ENCODE measurements at regions of chr10 and their contacts with region 1.

Region 1: GRCh38 chr10:102615361-102615760 is 28.9 kb upstream of the TRIM8 start:
- DNase-seq: peak; percentile 45
- H3K4me3 Mint-ChIP-seq: no peak overlapping the region
- H3K27ac Mint-ChIP-seq: no peak overlapping the region
- H3K4me1 Mint-ChIP-seq: peaks cover 29% of the 10 kb centered on the region
- H3K27me3 Mint-ChIP-seq: no peaks in the 10 kb centered on the region

Region 2: DNA sequence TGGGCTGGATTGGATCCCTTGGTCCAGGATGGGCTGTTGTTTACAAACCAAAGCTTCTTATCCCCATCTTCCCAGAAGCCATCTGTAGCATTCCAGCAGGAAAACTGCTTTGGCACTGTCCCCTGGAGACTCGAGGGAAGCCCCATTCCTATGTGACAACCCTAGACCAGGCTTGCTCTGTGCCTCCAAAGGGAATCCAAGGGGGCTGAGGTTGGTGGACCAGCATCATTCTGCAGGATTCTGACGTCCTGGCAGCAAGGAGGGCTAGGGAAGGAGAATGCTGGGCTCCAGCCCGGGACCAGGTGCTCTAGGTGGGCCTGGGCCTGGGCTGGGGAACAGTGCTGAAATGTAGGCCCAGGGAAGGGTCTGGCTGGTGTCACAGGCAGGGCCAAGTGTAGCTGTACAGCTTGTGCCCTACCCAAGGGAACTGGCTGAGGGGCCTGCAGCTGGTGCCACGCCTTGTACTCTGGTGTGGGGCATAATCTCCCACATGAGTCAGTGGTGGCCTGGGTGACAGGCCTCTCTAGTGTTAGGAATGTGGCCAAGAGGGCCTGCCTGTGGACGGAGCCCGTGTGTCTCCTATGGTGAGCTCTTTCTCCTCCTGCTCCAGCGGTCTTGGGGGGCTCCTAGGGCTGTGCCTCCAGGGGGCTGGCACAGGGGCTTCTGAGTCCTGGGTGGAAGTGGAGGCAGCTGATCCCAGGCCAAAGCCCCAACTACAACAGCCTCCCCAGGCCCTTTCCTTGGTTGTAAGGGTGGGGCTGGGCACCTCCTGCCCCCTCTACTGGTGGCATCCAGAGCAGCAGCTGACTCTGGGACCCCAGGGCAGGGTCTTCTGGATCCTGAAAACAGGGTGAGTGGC is 54.1 kb after region 1 on chr10:
- CTCF ChIA-PET with region 1: interaction called, 6 read pairs
- intact Hi-C with region 1: loop called (anchors 2 kb)
- DNase-seq: no peak
- H3K4me3 Mint-ChIP-seq: no peak overlapping the region
- H3K27ac Mint-ChIP-seq: no peak overlapping the region
- H3K4me1 Mint-ChIP-seq: peaks cover 24% of the 10 kb centered on the region
- H3K27me3 Mint-ChIP-seq: no peaks in the 10 kb centered on the region